Heart left ventricle (tissue), 16 donors: ENCODE measurements at regions of chr7 and their contacts with region 1.

Region 1: GRCh38 chr7:73879977-73880681 is 19.2 kb downstream of the TMEM270 start:
- DNase-seq: peak in 4 of 5 donors; percentile 38 to 85 (median 74)
- ATAC-seq: peak; percentile 49 to 87 (median 62)
- H3K4me3 ChIP-seq: no peak overlapping the region
- H3K27ac ChIP-seq: peak overlapping the region; percentile 58 to 89 (median 78)
- H3K4me1 ChIP-seq: peaks cover 3 to 37% (median 29%) of the 10 kb centered on the region in 12 donors
- H3K27me3 ChIP-seq: no peaks in the 10 kb centered on the region
- CTCF ChIP-seq: no peak
- POLR2A ChIP-seq: no peak

Region 2: GRCh38 chr7:74032191-74032490 is 152.0 kb after region 1 on chr7:
- intact Hi-C with region 1: loop called in 2 of 10 experiments (anchors 5 kb)
- DNase-seq: peak in 4 of 5 donors; percentile 39 to 68 (median 57)
- ATAC-seq: peak; percentile 8 to 29 (median 25)
- H3K4me3 ChIP-seq: peak overlapping the region in 5 of 12 donors; percentile 12 to 74 (median 57)
- H3K27ac ChIP-seq: peak overlapping the region in 10 of 12 donors; percentile 12 to 91 (median 80)
- H3K4me1 ChIP-seq: peaks cover 8 to 74% (median 31%) of the 10 kb centered on the region in 12 donors
- H3K27me3 ChIP-seq: peaks cover 0 to 34% (median 0%) of the 10 kb centered on the region in 9 donors
- CTCF ChIP-seq: no peak
- POLR2A ChIP-seq: no peak